ENCODE measurements at regions of chr18 and their contacts with region 1.

Region 1: GRCh38 chr18:62584241-62585120 is 61.7 kb downstream of the ZCCHC2 start:
- DNase-seq: peak; percentile 93

Region 2: DNA sequence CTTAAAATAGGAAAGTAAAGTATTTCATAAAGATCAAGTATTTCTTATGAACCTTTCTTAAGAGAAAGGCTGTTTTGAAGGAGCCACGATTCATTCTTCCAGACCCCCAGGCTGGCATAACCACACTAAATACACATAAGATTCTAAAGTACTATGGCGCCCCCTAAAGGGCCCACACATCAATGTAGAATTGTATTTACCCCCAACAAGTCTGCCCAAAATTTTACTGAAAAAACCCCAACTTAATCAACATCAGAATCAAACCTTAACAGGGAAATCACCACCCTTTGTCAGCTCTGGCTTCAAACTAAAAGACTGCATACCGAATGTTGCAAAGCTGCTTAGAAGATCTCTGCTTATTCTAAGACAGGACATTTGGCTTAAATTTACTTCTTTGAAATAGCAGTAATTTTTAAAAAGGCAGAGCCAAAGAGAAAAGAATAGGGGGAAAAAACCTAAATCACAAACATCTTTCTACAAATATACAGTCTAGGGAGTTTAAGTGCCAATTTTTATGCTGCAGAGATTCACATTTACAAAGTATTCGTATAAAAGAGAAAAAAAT is 755.5 kb after region 1 on chr18:
- in situ Hi-C with region 1: loop called (anchors 25 kb)
- DNase-seq: peak; percentile 72

Measured in KBM-7 (cell line).